Mammary epithelial cell (primary cell): ENCODE measurements at regions of chr4 and their contacts with region 1.

Region 1: DNA sequence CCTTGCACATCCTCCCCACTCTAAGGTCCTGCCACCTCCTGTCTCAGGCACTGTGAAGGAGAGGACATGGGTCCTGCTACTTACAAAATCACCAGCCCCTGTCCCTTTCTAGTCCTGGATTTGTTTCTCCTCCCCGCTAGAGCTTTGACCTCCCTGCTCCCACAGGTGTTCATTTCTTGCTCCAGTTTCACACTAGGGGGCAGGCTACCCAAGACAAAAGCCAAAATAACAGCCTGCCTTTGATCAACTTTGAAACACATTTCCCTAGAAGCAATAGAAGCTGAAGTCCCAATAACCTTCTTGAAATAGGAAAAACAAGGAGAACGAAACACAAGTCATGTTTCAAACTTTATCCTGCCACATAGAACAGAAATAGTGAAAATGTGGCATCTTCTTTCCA is 164.4 kb downstream of the QDPR start:
- DNase-seq: peak; percentile 3
- H3K4me3 ChIP-seq: no peak overlapping the region
- H3K27ac ChIP-seq: no peak overlapping the region
- H3K4me1 ChIP-seq: no peaks in the 10 kb centered on the region
- H3K27me3 ChIP-seq: no peaks in the 10 kb centered on the region
- CTCF ChIP-seq: peak; percentile 37 to 61

Region 2: DNA sequence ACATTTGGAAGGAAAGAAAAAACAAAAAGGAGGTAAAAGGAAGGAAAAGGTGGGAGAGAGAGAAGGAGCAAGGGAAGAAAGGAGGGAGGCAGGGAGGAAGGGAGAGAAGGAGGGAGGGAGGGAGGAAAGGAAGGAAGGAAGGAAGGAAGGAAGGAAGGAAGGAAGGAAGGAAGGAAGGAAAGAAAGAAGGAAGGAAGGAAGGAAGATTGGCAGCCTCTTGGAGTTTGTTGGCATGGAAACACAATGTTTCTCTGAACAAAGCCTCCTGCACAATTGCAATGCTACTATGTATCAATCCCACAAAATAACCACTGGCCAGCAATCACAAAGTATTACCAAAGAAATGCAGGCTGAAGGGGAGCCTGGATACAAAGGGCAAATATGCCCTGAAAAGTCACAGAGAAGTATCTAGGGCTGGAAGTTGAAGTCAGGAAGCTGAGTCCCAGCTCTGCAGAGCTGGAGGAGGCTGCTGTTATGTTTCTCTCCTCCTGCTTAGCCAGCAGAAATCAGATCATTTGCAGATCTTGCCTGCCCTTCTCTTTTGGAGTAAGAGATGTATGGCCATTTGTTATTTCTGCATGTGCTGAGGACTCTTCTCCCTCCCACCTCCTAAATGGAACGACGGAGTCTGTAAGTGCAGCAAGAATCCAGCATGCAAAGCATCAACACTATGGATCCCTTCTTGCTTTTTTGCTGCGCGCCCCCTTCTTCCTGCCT is 253.1 kb before region 1 on chr4:
- CTCF ChIA-PET with region 1: no interaction called
- dilution Hi-C with region 1: no loop called
- in situ Hi-C with region 1: no loop called
- intact Hi-C with region 1: no loop called
- DNase-seq: no peak
- H3K4me3 ChIP-seq: no peak overlapping the region
- H3K27ac ChIP-seq: no peak overlapping the region
- H3K4me1 ChIP-seq: no peaks in the 10 kb centered on the region
- H3K27me3 ChIP-seq: no peaks in the 10 kb centered on the region
- CTCF ChIP-seq: no peak

Region 3: DNA sequence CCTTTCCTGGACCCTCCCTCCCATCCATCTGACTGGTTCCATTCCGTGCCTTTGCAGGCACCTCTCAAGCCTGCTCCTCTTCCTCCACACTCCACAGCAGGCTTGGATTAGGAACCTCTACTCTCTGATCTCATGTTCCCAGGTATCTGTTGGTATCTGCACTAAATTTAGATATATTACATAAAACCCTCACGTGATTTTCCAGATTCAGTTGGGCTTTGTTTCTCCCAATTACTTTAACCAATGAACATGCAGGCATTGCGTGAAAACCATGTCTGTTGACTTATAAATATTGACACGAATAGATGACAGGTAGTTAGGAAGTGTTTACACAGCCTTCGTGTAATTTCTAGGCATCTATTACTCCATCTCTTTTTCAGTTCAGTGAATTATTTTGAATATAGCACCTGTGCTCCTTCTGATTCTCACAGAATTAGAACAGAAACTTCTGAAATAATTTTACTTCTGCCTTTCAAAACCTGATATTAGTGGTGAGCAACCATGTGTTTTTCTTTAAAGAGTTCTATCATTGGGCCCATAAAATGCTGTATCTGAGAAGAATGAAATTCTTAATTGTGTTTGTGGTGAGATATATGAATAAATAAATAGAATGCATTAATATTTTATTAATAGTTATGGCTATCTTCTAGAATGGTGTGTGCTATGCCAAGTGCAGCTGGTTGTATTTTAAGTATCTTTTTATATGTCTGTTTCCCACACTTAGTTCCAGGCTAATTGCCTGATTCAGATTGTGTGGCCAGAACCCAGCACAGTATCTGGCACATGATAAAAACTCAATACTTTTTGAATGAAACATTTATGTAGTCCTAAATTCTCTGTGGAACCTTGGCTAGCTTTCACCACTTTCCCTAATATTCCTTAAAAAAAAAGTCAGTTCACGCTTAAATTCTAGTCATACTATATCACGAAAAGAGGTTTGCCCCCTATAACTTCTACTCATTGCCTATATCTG is 140.3 kb before region 1 on chr4:
- CTCF ChIA-PET with region 1: no interaction called
- dilution Hi-C with region 1: no loop called
- in situ Hi-C with region 1: no loop called
- intact Hi-C with region 1: no loop called
- DNase-seq: no peak
- H3K4me3 ChIP-seq: no peak overlapping the region
- H3K27ac ChIP-seq: no peak overlapping the region
- H3K4me1 ChIP-seq: no peaks in the 10 kb centered on the region
- H3K27me3 ChIP-seq: no peaks in the 10 kb centered on the region
- CTCF ChIP-seq: no peak

Region 4: DNA sequence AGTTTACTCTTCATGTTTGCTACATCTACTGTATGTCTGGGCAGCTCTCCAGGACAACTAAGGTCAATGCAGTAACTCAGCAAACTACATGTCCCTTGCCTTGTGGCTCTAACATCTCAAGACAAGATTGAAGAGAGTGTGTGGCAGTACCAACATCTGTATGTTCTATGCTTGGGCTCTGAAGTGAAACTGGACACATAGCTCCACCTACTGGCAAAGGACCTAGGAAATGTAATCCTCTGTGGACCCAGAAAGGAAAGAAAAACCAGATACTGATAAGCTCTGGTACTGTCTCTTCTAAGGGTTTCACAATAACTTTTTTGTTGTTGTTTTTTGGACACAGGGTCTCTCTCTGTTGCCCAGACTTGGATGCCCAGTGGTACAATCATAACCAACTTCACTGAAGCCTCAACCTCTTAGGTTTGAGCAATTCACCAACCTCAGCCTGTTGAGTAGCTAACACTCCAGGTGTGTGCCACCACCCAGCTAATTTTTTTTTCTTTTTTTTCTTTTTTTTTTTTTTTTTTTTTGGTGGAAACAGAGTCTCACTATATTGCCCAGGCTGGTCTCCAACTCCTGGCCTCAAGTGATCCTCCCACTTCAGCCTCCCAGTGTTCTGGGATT is 100.3 kb after region 1 on chr4:
- CTCF ChIA-PET with region 1: no interaction called
- dilution Hi-C with region 1: no loop called
- in situ Hi-C with region 1: no loop called
- intact Hi-C with region 1: loop called (anchors 1 kb)
- DNase-seq: peak; percentile 51
- H3K4me3 ChIP-seq: no peak overlapping the region
- H3K27ac ChIP-seq: no peak overlapping the region
- H3K4me1 ChIP-seq: no peaks in the 10 kb centered on the region
- H3K27me3 ChIP-seq: no peaks in the 10 kb centered on the region
- CTCF ChIP-seq: peak; percentile 71 to 81

Region 5: DNA sequence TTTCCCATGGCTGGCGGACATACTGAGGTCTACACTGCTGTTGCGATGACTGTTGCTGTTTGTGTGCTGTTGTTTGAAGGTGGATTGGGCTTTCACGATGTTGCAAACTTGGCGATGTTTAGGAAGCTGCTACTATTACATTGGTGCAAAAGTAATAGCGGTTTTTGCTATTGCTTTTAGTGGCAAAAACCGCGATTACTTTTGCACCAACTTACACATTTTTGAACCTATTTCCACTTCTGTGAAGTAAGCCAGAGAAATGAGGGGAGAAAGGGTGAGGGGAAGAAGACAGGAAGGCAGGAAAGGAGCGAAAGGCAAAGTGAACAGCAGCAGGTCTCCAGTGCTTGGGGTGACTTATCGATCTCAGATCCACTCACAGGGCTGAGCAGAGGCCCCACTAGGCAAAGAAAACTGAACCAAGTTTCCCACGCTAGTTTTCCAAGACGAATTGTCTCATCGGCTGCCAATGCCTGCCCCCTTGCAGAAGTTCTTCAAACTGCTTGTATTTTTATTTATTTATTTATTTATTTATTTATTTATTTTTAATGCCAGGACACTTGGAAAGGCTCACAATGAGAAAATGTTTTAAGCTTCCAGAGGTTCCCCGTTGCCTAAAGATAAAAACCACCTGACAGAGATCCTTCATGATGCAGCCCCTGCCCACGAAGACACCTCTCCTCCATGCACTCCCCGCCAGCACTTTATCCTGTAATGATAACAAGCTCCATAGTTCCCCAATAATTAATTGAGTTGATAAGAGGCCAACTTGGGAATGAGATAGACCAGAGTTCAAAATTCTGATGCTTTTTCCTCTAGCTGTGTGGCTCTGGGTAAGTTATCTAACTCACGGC is 121.2 kb after region 1 on chr4:
- CTCF ChIA-PET with region 1: no interaction called
- dilution Hi-C with region 1: no loop called
- in situ Hi-C with region 1: no loop called
- intact Hi-C with region 1: loop called (anchors 2 kb)
- DNase-seq: no peak
- H3K4me3 ChIP-seq: no peak overlapping the region
- H3K27ac ChIP-seq: no peak overlapping the region
- H3K4me1 ChIP-seq: no peaks in the 10 kb centered on the region
- H3K27me3 ChIP-seq: no peaks in the 10 kb centered on the region
- CTCF ChIP-seq: peak; percentile 3 to 40